HCT116 (cell line): ENCODE measurements at regions of chr10 and their contacts with region 1.

Region 1: GRCh38 chr10:7818295-7819122 is at the start of gene TAF3:
- DNase-seq: peak; percentile 72
- ATAC-seq: peak; percentile 91
- H3K4me3 ChIP-seq: peak within 1 kb of the TSS; percentile 92 to 96
- H3K27ac ChIP-seq: peak within 1 kb of the TSS; percentile 35; the same call in 1 of the 2 replicates
- H3K4me1 ChIP-seq: peaks cover 9 to 15% of the 10 kb centered on the region in 2 experiments; a peak in 3 of 4 replicates
- H3K27me3 ChIP-seq: no peaks in the 10 kb centered on the region
- CTCF ChIP-seq: no peak
- POLR2A ChIP-seq: peak; percentile 84
- RAD21 ChIP-seq: no peak
- total RNA-seq, gene TAF3: 8.0 TPM

Region 2: GRCh38 chr10:6275022-6275997 is 1543.2 kb before region 1 on chr10:
- CTCF ChIA-PET with region 1: no interaction called
- POLR2A ChIA-PET with region 1: no interaction called
- RAD21 ChIA-PET with region 1: no interaction called
- intact Hi-C with region 1: loop called (anchors 5 kb)
- DNase-seq: peak; percentile 89
- ATAC-seq: peak; percentile 94
- H3K4me3 ChIP-seq: peak overlapping the region; percentile 45 to 53
- H3K27ac ChIP-seq: peak overlapping the region; percentile 61
- H3K4me1 ChIP-seq: peaks cover 28 to 39% of the 10 kb centered on the region in 2 experiments
- H3K27me3 ChIP-seq: no peaks in the 10 kb centered on the region
- CTCF ChIP-seq: peak in 1 of 3 experiments; percentile 29; a peak in 1 of 6 replicates
- POLR2A ChIP-seq: peak; percentile 87
- RAD21 ChIP-seq: no peak

Region 3: DNA sequence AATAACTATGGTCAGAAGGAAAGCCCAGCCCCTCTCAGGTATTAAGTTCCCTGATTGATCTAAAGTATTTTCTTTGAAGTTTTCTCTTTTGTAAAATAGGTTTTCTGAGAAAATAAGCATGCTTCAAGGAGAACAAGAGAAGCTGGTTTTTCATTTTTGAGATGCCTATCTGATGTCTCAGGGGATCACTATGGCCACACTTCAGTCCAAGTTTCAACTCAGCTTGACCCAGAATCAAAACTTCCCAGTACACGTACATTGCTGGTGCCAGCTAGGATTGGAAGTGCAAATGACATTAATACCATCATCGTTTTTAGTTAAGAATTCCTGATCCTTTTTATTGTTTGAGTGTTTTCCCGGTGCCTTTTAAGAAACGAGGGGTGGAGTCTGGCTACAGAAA is 158.9 kb before region 1 on chr10:
- CTCF ChIA-PET with region 1: no interaction called
- POLR2A ChIA-PET with region 1: no interaction called
- RAD21 ChIA-PET with region 1: no interaction called
- intact Hi-C with region 1: no loop called
- DNase-seq: no peak
- ATAC-seq: no peak
- H3K4me3 ChIP-seq: no peak overlapping the region
- H3K27ac ChIP-seq: no peak overlapping the region
- H3K4me1 ChIP-seq: no peaks in the 10 kb centered on the region
- H3K27me3 ChIP-seq: peaks cover 27% of the 10 kb centered on the region
- CTCF ChIP-seq: no peak
- POLR2A ChIP-seq: no peak
- RAD21 ChIP-seq: no peak

Region 4: GRCh38 chr10:7787857-7788638 is 30.5 kb before region 1 on chr10 and contains the starts of genes ATP5F1C and KIN:
- CTCF ChIA-PET with region 1: no interaction called
- POLR2A ChIA-PET with region 1: interaction called, 5 read pairs
- RAD21 ChIA-PET with region 1: no interaction called
- intact Hi-C with region 1: loop called (anchors 2 kb)
- DNase-seq: peak; percentile 86
- ATAC-seq: peak; percentile 95
- H3K4me3 ChIP-seq: peak within 1 kb of the TSS; percentile 90 to 92
- H3K27ac ChIP-seq: peak within 1 kb of the TSS; percentile 75
- H3K4me1 ChIP-seq: peaks cover 16 to 33% of the 10 kb centered on the region in 2 experiments; a peak in 3 of 4 replicates
- H3K27me3 ChIP-seq: no peaks in the 10 kb centered on the region
- CTCF ChIP-seq: no peak
- POLR2A ChIP-seq: peak; percentile 88
- RAD21 ChIP-seq: no peak
- total RNA-seq, gene ATP5F1C: 292 TPM
- total RNA-seq, gene KIN: 13.6 TPM

Region 5: DNA sequence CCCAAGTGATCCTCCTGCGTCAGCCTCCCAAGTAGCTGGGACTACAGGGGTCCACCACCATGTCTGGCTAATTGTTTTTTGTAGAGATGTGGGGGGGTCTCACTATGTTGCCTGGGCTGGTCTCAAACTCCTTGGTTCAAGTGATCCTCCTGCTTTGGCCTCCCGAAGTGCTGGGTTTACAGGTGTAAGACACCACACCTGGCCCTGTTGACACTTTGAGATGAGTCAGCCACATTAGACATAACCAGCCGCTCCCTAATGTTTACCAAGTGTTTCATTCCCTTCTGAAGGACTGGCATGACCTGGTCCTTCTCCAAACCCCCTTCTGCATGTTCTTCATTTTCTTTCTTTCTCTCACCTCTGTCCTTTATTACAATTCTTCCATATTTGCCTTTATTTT is 67.5 kb after region 1 on chr10:
- CTCF ChIA-PET with region 1: no interaction called
- POLR2A ChIA-PET with region 1: no interaction called
- RAD21 ChIA-PET with region 1: no interaction called
- intact Hi-C with region 1: no loop called
- DNase-seq: no peak
- ATAC-seq: no peak
- H3K4me3 ChIP-seq: no peak overlapping the region
- H3K27ac ChIP-seq: no peak overlapping the region
- H3K4me1 ChIP-seq: no peaks in the 10 kb centered on the region
- H3K27me3 ChIP-seq: no peaks in the 10 kb centered on the region
- CTCF ChIP-seq: no peak
- POLR2A ChIP-seq: no peak
- RAD21 ChIP-seq: no peak